ENCODE measurements at regions of chr1 and their contacts with region 1.

Region 1: DNA sequence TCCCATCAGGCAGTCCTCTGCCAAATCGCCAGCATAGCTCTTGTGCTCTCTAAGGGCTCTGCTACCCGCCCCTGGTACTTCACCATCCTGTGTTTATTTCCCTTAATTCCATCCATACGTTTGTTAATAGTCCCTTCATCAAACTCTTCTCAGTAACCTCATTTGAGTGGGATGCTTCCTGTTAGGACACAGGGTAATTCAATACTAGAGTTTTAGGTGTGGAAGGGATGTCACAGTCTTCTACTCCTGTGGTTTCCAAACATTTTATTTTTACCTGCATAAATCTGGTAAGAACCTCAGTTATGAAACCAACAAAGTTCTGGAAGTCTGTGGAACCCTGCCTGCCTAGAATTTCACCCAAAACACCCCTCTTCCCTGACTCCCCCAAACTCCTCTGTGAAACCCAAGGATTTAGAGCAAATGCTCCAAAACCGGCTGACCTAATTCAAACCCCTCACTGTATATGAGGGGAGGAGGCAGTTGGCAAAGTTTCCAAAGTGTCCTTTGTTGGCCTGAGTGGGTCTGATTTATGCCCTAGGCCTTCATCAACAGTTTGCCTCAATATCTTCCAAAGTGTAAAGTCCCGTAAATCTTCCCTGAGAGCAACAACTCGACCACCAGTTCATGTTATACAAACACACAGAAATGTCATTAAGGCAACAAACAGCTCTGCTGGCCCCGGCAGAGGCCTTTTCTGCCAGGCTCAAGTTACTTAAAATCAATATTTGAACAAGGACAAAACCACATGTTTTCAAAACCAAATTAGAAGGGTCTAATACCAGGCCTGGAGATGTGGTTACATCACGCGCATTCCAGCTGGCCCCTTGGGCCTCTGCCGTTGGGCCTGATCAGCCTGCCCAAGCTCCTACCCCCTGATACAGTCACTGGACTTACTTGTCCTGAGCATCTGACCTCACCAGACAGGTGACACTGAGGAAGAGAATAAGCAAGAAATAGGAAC is 82.4 kb upstream of the FGGY start:
- DNase-seq: no peak
- ATAC-seq: peak in 1 of 4 donors; percentile 11
- H3K4me3 ChIP-seq: no peak overlapping the region
- H3K27ac ChIP-seq: no peak overlapping the region
- H3K4me1 ChIP-seq: peaks cover 5% of the 10 kb centered on the region
- H3K27me3 ChIP-seq: no peaks in the 10 kb centered on the region
- CTCF ChIP-seq: no peak

Region 2: DNA sequence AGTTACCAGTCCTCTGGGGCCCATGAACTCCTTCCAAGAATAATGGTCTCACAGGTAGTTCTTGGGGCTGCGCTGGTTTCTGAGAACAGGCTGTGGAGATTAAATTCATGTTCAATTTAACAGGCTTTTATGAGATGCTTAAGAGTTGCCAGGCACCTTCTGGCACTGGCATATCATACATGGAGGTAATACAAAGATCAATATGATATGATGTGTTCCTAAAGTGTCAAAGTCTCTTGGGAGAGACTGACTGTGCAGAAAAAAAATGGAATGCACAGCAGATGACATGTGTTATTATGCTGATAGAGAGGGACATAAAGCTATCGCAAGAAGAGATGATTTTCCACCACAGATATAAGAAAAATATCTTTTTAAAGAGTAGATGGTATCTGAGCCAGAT is 705.2 kb after region 1 on chr1:
- intact Hi-C with region 1: loop called in 1 of 2 experiments (anchors 5 kb)
- DNase-seq: no peak
- ATAC-seq: no peak
- H3K4me3 ChIP-seq: no peak overlapping the region
- H3K27ac ChIP-seq: no peak overlapping the region
- H3K4me1 ChIP-seq: peaks cover 6% of the 10 kb centered on the region
- H3K27me3 ChIP-seq: no peaks in the 10 kb centered on the region
- CTCF ChIP-seq: no peak